ENCODE measurements at regions of chr6 and their contacts with region 1.

Region 1: DNA sequence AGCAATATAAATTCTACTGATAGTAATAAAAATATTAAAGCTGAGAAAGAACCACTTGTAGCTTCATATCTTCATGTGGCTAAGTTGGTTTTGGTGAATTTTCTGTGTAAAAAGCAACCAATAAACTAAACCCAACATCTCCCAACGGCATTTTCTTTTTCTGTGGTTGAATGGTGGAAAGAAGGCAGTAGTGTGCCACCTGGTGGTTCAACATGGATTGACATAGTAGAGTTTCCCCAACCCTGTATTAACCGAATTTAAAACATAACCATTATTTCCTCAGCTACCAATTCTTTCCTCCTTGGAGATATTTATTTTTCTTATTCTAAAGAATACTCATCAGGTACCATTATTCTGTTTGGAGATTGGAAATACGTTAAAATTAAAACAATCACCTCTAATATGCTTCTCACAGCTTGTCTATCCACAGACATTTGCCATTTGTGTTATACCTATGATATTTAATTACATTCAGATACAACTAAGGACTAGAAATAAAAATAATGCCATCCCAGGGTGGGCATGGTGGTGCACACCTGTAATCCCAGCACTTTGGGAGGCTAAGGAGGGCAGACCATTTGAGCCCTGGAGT is 117.1 kb upstream of the EEF1E1 start:
- DNase-seq: peak; percentile 53
- ATAC-seq: peak; percentile 69
- H3K4me3 ChIP-seq: no peak overlapping the region
- H3K27ac ChIP-seq: no peak overlapping the region
- H3K4me1 ChIP-seq: no peaks in the 10 kb centered on the region
- H3K27me3 ChIP-seq: no peaks in the 10 kb centered on the region
- CTCF ChIP-seq: peak; percentile 69
- EP300 ChIP-seq: no peak
- POLR2A ChIP-seq: no peak
- RAD21 ChIP-seq: 0 out of 2 replicates have a peak, but pooled peaks have one; percentile 23

Region 2: DNA sequence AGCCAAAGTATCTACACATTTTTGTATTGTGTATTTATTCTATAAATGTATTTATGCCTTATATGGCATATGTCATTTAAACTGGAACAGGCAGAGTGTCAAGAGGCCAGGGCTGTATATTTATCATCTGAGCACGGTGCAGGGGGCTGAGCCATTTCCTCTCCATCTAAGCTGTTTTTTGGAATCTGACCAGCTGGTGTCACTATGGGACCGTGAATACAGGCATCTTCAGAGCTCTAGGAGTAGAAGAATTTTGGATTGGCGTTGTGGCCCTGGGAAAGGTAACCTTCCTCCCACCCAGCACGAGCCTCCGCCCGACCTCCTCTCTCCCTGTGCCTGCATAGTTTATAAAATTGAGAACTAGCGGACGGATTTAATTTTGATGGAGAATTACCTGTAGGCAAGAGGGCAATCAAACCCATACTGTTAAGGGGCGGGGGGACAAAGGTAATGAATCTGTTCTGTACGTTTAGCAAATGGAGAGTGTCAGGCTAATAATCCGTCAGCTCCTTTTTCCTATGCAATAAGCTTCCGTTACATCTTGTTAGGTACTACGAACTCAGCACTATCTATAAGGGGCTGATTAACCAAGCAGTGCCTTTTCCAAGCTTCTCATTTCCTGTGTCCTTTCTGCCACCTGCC is 88.1 kb before region 1 on chr6:
- CTCF ChIA-PET with region 1: interaction called, 92 read pairs
- POLR2A ChIA-PET with region 1: no interaction called
- in situ Hi-C with region 1: loop called (anchors 5 kb)
- intact Hi-C with region 1: loop called (anchors 1 kb)
- DNase-seq: peak; percentile 77
- ATAC-seq: peak; percentile 97
- H3K4me3 ChIP-seq: no peak overlapping the region
- H3K27ac ChIP-seq: no peak overlapping the region
- H3K4me1 ChIP-seq: peaks cover 4% of the 10 kb centered on the region
- H3K27me3 ChIP-seq: peaks cover 0 to 4% of the 10 kb centered on the region in 2 experiments; a peak in 1 of 5 replicates
- CTCF ChIP-seq: peak; percentile 90
- EP300 ChIP-seq: no peak
- POLR2A ChIP-seq: no peak
- RAD21 ChIP-seq: peak; percentile 92

Region 3: GRCh38 chr6:8187209-8187608 is 32.2 kb before region 1 on chr6:
- CTCF ChIA-PET with region 1: no interaction called
- POLR2A ChIA-PET with region 1: no interaction called
- in situ Hi-C with region 1: no loop called
- intact Hi-C with region 1: no loop called
- DNase-seq: no peak
- ATAC-seq: no peak
- H3K4me3 ChIP-seq: no peak overlapping the region
- H3K27ac ChIP-seq: no peak overlapping the region
- H3K4me1 ChIP-seq: no peaks in the 10 kb centered on the region
- H3K27me3 ChIP-seq: no peaks in the 10 kb centered on the region
- CTCF ChIP-seq: no peak
- EP300 ChIP-seq: no peak
- POLR2A ChIP-seq: no peak
- RAD21 ChIP-seq: no peak